ENCODE measurements at regions of chr3 and their contacts with region 1.

Region 1: GRCh38 chr3:20185701-20186598 is at the start of gene SGO1:
- DNase-seq: peak; percentile 99
- H3K4me3 ChIP-seq: peak within 1 kb of the TSS; percentile 86 to 94 (median 91)
- H3K27ac ChIP-seq: peak within 1 kb of the TSS; percentile 93
- H3K4me1 ChIP-seq: peaks cover 13% of the 10 kb centered on the region
- H3K27me3 ChIP-seq: no peaks in the 10 kb centered on the region
- CTCF ChIP-seq: peak in 1 of 2 donors; percentile 23
- total RNA-seq, gene SGO1: 0.50 to 13.6 TPM

Region 2: GRCh38 chr3:19885468-19885867 is 300.5 kb before region 1 on chr3:
- CTCF ChIA-PET with region 1: interaction called, 3 read pairs
- dilution Hi-C with region 1: no loop called
- in situ Hi-C with region 1: no loop called
- intact Hi-C with region 1: loop called (anchors 5 kb)
- DNase-seq: peak; percentile 13
- H3K4me3 ChIP-seq: no peak overlapping the region
- H3K27ac ChIP-seq: no peak overlapping the region
- H3K4me1 ChIP-seq: peaks cover 14% of the 10 kb centered on the region
- H3K27me3 ChIP-seq: no peaks in the 10 kb centered on the region
- CTCF ChIP-seq: peak; percentile 49 to 61

Region 3: GRCh38 chr3:20039766-20040475 is 146.0 kb before region 1 on chr3 and contains the start of gene KAT2B:
- CTCF ChIA-PET with region 1: interaction called, 3 read pairs
- dilution Hi-C with region 1: no loop called
- in situ Hi-C with region 1: no loop called
- intact Hi-C with region 1: loop called (anchors 1 kb)
- DNase-seq: peak; percentile 64
- H3K4me3 ChIP-seq: peak within 1 kb of the TSS; percentile 76 to 96 (median 89)
- H3K27ac ChIP-seq: peak within 1 kb of the TSS; percentile 20
- H3K4me1 ChIP-seq: peaks cover 23% of the 10 kb centered on the region
- H3K27me3 ChIP-seq: no peaks in the 10 kb centered on the region
- CTCF ChIP-seq: peak; percentile 13 to 75
- total RNA-seq, gene KAT2B: 8.6 to 16.2 TPM

Region 4: GRCh38 chr3:20054549-20054987 is 131.4 kb before region 1 on chr3:
- CTCF ChIA-PET with region 1: no interaction called
- dilution Hi-C with region 1: no loop called
- in situ Hi-C with region 1: no loop called
- intact Hi-C with region 1: loop called (anchors 1 kb)
- DNase-seq: peak; percentile 99
- H3K4me3 ChIP-seq: no peak overlapping the region
- H3K27ac ChIP-seq: peak overlapping the region; percentile 32
- H3K4me1 ChIP-seq: peaks cover 37% of the 10 kb centered on the region
- H3K27me3 ChIP-seq: no peaks in the 10 kb centered on the region
- CTCF ChIP-seq: no peak

Region 5: GRCh38 chr3:20256144-20256543 is 70.2 kb after region 1 on chr3:
- CTCF ChIA-PET with region 1: no interaction called
- dilution Hi-C with region 1: no loop called
- in situ Hi-C with region 1: no loop called
- intact Hi-C with region 1: no loop called
- DNase-seq: peak; percentile 59
- H3K4me3 ChIP-seq: no peak overlapping the region
- H3K27ac ChIP-seq: no peak overlapping the region
- H3K4me1 ChIP-seq: peaks cover 3% of the 10 kb centered on the region
- H3K27me3 ChIP-seq: no peaks in the 10 kb centered on the region
- CTCF ChIP-seq: no peak

Region 6: GRCh38 chr3:20442846-20443245 is 256.9 kb after region 1 on chr3:
- CTCF ChIA-PET with region 1: no interaction called
- dilution Hi-C with region 1: no loop called
- in situ Hi-C with region 1: no loop called
- intact Hi-C with region 1: no loop called
- DNase-seq: no peak
- H3K4me3 ChIP-seq: no peak overlapping the region
- H3K27ac ChIP-seq: no peak overlapping the region
- H3K4me1 ChIP-seq: no peaks in the 10 kb centered on the region
- H3K27me3 ChIP-seq: no peaks in the 10 kb centered on the region
- CTCF ChIP-seq: no peak